AG04450 (cell line): ENCODE measurements at regions of chr1 and their contacts with region 1.

Region 1: DNA sequence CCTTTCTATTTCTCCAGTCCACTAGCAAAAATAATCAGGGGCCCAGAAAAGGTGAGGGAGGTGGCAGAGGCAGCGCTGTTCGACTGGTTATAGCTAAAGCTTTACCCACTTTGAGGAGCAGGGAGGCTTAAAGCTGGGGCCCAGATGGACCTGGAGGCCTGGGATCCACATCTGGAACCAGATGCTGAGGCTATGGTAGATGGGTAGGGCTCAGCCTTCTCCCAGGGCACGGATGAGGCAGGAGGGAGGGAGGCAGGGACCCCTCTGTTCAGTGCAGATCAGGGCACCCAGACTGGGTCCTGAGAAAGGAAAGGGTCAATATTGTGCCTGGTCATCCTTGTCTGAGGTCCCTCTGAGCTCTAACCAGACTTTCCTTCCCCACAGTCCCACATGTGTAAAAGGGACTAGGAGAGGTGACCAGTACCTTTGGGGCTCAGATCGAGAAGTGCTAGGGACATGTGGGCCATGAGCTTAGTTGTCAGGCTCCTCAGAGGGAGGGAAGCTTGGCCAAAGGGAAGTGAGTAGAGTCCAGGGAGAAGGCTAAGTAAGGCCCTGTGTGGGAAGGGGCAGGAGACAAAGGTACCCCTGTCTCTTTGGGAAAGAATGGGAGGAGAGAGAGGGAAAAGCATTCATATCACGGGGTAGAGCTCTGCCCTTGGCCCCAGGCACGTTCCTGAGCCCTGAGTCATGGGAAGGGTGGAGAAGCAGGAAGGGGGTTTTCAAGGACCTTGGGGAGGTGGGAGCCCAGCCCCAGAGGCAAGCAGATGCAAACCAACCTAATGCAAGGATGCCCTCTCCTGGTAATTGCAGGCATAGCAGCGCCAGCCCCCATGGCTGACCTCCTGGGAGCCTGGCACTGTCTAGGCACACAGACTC is 15.4 kb downstream of the LMNA start:
- DNase-seq: peak; percentile 93
- H3K4me3 ChIP-seq: peak overlapping the region; percentile 49
- H3K27ac ChIP-seq: peak overlapping the region; percentile 100
- H3K27me3 ChIP-seq: no peaks in the 10 kb centered on the region
- CTCF ChIP-seq: peak; percentile 95

Region 2: GRCh38 chr1:156082309-156083091 is 47.4 kb before region 1 on chr1 and contains the start of gene MEX3A:
- CTCF ChIA-PET with region 1: interaction called, 15 read pairs
- POLR2A ChIA-PET with region 1: interaction called, 4 read pairs
- DNase-seq: no peak
- H3K4me3 ChIP-seq: peak within 1 kb of the TSS; percentile 87
- H3K27ac ChIP-seq: peak within 1 kb of the TSS; percentile 61
- H3K27me3 ChIP-seq: no peaks in the 10 kb centered on the region
- CTCF ChIP-seq: no peak
- polyA plus RNA-seq, gene MEX3A: 11.8 and 14.6 TPM in 2 replicates

Region 3: GRCh38 chr1:156096640-156097391 is 33.1 kb before region 1 on chr1:
- CTCF ChIA-PET with region 1: interaction called, 682 read pairs
- POLR2A ChIA-PET with region 1: interaction called, 36 read pairs
- DNase-seq: peak; percentile 67
- H3K4me3 ChIP-seq: no peak overlapping the region
- H3K27ac ChIP-seq: peak overlapping the region; percentile 47
- H3K27me3 ChIP-seq: no peaks in the 10 kb centered on the region
- CTCF ChIP-seq: peak; percentile 98

Region 4: DNA sequence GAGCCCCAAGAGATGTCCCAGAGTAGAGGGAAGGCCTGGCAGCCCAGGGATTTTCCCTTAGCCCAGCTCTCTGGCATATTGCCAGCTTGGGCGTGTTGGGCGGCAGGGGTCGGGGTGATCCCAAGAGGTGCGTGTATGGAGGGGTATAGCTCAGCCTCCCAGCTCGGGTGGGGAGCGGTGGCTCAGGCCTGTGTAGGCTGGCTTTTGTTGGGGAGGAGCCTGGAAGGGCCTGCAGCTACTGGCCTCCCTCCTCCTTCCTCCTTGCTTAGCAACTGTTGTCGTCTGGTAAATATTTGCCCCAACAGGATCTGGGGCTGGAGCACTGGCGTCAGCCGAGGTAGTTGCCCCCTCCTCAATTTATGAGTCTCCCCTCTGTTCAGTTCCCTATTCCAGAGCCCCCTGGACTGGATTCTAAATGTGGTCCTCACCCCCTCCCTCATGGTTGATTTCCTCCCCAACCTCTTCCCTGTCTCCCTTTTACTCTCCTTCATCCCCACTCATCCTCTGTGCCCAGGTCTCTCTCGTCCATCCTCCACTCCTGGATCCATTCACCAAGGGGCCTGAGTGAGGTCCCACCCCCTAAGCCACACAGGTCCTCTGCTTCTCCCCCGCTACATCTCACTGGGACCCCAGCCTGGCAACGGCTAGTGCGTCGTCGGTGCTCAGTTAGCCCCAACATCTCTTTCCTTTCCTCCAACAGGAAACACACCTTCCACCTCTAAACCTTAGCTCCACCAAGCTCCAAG is 25.7 kb before region 1 on chr1:
- CTCF ChIA-PET with region 1: interaction called, 682 read pairs
- POLR2A ChIA-PET with region 1: interaction called, 36 read pairs
- DNase-seq: no peak
- H3K4me3 ChIP-seq: peak overlapping the region; percentile 7; the same call in 1 of the 2 replicates
- H3K27ac ChIP-seq: peak overlapping the region; percentile 61
- H3K27me3 ChIP-seq: no peaks in the 10 kb centered on the region
- CTCF ChIP-seq: no peak

Region 5: DNA sequence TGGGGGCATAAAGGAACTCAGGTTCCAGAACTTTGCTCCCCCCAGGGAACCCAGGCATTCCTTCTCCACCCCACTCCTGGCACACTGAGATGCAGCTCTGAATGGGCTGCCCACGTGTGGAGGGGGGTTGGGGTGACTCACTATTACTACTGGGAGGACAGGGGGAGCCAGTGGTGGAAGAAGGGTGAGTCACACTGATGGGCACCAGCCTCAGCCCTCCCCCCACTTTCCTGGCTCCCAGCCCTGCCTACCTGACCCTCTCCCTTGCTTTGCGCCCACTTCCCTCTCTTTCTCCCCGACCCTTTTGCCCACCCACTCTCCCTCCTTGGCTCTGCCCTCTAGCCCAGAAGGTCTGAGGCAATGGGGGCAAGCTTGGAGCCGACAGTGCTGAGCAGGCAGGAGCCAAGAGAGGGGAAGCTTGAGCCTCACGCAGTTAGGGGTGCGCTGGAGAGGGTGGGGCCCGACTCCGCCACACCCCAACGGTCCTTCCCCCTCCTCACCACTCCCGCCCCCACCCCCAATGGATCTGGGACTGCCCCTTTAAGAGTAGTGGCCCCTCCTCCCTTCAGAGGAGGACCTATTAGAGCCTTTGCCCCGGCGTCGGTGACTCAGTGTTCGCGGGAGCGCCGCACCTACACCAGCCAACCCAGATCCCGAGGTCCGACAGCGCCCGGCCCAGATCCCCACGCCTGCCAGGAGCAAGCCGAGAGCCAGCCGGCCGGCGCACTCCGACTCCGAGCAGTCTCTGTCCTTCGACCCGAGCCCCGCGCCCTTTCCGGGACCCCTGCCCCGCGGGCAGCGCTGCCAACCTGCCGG is 15.6 kb before region 1 on chr1 and contains the start of gene LMNA:
- CTCF ChIA-PET with region 1: interaction called, 37 read pairs
- POLR2A ChIA-PET with region 1: interaction called, 125 read pairs
- DNase-seq: peak; percentile 85
- H3K4me3 ChIP-seq: peak within 1 kb of the TSS; percentile 100
- H3K27ac ChIP-seq: peak within 1 kb of the TSS; percentile 93
- H3K27me3 ChIP-seq: no peaks in the 10 kb centered on the region
- CTCF ChIP-seq: no peak
- polyA plus RNA-seq, gene LMNA: 365 and 382 TPM in 2 replicates

Region 6: DNA sequence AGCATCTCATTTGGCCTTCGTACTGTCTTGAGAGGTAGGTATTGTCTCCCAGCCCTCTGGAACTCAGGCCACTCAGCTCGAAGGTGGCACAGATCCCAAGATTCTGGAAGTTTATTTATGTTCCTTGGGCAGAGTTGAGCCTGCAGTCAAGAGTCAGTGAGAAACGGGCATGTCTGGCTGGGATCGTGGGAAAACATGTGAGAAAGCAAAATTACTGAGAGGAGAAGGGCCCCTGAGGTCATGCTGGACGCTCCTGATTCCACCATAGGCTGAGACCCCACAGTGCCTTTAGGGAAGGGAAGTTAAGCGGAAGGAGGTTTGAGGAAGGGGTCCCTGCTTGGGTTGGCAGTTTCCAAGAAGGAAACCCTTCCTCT is 10.9 kb after region 1 on chr1:
- CTCF ChIA-PET with region 1: interaction called, 10 read pairs
- POLR2A ChIA-PET with region 1: interaction called, 3 read pairs
- DNase-seq: no peak
- H3K4me3 ChIP-seq: no peak overlapping the region
- H3K27ac ChIP-seq: peak overlapping the region; percentile 47
- H3K27me3 ChIP-seq: no peaks in the 10 kb centered on the region
- CTCF ChIP-seq: no peak

Region 7: GRCh38 chr1:156146020-156146768 is 16.2 kb after region 1 on chr1:
- CTCF ChIA-PET with region 1: interaction called, 10 read pairs
- POLR2A ChIA-PET with region 1: interaction called, 5 read pairs
- DNase-seq: peak; percentile 86
- H3K4me3 ChIP-seq: no peak overlapping the region
- H3K27ac ChIP-seq: no peak overlapping the region
- H3K27me3 ChIP-seq: peaks cover 13% of the 10 kb centered on the region
- CTCF ChIP-seq: peak; percentile 64

Region 8: DNA sequence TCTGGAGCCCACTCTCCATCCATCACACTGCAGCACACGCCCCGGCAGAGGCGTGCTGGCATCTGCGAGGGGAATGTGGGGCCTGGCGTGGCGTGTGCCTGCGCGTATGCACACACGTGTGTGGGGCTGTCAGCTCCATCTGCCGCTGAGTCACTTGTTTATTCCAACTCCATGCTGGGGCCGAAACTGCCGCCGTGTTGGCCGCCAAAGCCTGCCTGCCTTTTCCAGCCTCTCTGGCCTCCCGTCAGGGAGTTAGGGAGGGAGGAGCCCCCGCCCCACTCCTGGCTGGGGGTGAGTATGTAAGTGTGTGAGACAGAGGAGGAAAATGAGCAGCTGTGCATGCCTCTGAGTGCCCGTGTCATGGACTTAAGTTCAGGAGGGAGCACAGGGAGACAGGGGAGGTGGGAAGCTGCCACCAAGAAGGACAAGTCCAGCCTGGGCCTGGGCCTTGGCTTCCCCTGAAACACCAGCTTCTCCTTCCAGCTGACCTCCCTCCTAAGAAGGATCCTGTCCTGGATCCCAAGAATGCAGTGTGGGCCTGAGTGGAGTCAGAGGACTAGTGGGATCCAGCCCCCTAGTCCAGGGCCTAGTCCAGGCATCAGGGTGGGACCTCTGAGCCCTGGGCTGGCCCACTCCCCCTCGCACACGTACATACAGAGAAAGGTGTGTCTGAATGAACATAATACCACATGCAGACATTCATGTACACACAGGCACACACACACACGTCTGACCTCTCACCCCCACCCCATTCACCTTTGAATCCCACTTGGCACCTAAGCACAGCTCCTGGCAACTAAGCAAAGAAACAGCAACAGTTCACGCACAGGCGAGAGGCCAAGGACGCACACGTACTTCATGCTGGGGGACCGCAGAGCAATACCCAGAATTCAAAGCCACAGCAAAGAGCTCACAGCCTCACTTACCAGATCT is 345.9 kb after region 1 on chr1:
- CTCF ChIA-PET with region 1: no interaction called
- POLR2A ChIA-PET with region 1: no interaction called
- DNase-seq: peak; percentile 93
- H3K4me3 ChIP-seq: no peak overlapping the region
- H3K27ac ChIP-seq: peak overlapping the region; percentile 97
- H3K27me3 ChIP-seq: no peaks in the 10 kb centered on the region
- CTCF ChIP-seq: no peak